ENCODE measurements at regions of chr11 and their contacts with region 1.

Region 1: GRCh38 chr11:129315781-129316481 is 59.7 kb upstream of the BARX2 start:
- DNase-seq: peak; percentile 72
- H3K4me3 ChIP-seq: no peak overlapping the region
- H3K27ac ChIP-seq: peak overlapping the region; percentile 67 to 79 (median 76)
- H3K4me1 ChIP-seq: peaks cover 13 to 55% (median 29%) of the 10 kb centered on the region in 4 donors
- H3K27me3 ChIP-seq: no peaks in the 10 kb centered on the region
- CTCF ChIP-seq: no peak
- EP300 ChIP-seq: no peak
- POLR2A ChIP-seq: no peak

Region 2: GRCh38 chr11:129279326-129280026 is 36.5 kb before region 1 on chr11:
- in situ Hi-C with region 1: loop called in 1 of 4 experiments (anchors 5 kb)
- intact Hi-C with region 1: no loop called
- DNase-seq: peak; percentile 84
- H3K4me3 ChIP-seq: peak overlapping the region; percentile 51 to 70 (median 64)
- H3K27ac ChIP-seq: peak overlapping the region; percentile 74 to 81 (median 76)
- H3K4me1 ChIP-seq: peaks cover 19 to 70% (median 49%) of the 10 kb centered on the region in 4 donors
- H3K27me3 ChIP-seq: no peaks in the 10 kb centered on the region
- CTCF ChIP-seq: no peak
- EP300 ChIP-seq: no peak
- POLR2A ChIP-seq: no peak

Region 3: DNA sequence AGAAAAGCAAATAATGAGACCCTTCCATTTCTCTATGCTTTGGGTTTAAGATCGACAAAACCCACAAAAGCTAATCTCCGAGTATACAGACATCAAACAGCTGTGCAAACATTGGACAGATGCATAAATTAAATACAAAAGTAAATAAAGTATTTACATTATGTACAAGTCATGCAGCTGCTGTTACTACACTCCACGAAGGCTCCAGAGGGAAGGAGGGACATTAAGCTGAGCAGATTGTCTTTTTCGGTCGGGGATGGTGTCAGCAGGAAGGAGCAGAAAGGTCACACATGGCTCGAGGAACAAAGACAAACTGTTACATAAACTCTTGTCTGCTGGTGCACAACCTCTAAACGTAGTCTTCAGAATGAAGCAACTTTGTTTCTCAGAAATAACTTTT is 29.1 kb before region 1 on chr11:
- in situ Hi-C with region 1: loop called in 1 of 4 experiments (anchors 5 kb)
- intact Hi-C with region 1: loop called (anchors 2 kb)
- DNase-seq: no peak
- H3K4me3 ChIP-seq: no peak overlapping the region
- H3K27ac ChIP-seq: no peak overlapping the region
- H3K4me1 ChIP-seq: peaks cover 0 to 44% (median 11%) of the 10 kb centered on the region in 4 donors
- H3K27me3 ChIP-seq: no peaks in the 10 kb centered on the region
- CTCF ChIP-seq: no peak
- EP300 ChIP-seq: no peak
- POLR2A ChIP-seq: no peak

Region 4: DNA sequence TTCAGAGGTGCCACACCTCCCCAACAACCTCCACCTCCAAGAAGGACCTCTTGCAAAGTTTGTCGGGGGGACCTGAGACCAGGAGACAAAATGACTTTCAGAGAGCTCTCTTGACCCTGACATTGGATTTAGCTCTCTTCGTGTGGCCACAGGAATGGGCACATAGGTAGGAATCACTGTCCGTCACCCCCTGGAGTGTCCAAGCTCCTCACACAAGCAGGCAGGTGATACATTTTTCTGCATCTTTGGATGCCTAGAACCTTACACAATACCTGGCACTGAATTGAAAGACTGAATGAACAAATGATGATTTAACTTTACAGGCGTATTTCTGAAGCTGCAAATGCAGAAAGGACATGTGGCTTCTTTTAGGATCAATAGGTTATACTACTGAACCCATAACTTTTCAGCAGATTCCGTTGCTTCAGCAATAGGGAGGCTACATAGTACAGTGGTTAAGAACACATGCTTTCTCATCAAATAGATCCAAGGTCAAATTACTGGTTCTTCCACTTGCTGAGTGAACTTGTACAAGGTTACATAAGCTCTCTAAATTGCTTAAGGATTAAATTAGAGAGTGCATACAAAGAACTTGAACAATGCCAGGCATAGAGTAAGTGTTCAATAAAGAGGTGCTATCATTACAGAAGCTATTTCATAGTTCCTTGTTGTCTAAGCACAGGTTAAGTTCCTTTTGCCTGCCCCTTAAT is 189.2 kb after region 1 on chr11:
- in situ Hi-C with region 1: no loop called
- intact Hi-C with region 1: no loop called
- DNase-seq: no peak
- H3K4me3 ChIP-seq: no peak overlapping the region
- H3K27ac ChIP-seq: no peak overlapping the region
- H3K4me1 ChIP-seq: no peaks in the 10 kb centered on the region
- H3K27me3 ChIP-seq: no peaks in the 10 kb centered on the region
- CTCF ChIP-seq: no peak
- EP300 ChIP-seq: no peak
- POLR2A ChIP-seq: no peak